ENCODE measurements at regions of chr2 and their contacts with region 1.

Region 1: GRCh38 chr2:62456721-62457539 is 49.1 kb downstream of the TMEM17 start:
- DNase-seq: peak; percentile 12 to 25
- ATAC-seq: peak; percentile 73 to 84
- H3K4me3 ChIP-seq: peak overlapping the region; percentile 63 to 99 (median 75)
- H3K27ac ChIP-seq: peak overlapping the region; percentile 50 to 73 (median 58)
- H3K4me1 ChIP-seq: peaks cover 3 to 7% of the 10 kb centered on the region in 2 donors
- H3K27me3 ChIP-seq: no peaks in the 10 kb centered on the region
- CTCF ChIP-seq: peak; percentile 89 to 99 (median 97)
- POLR2A ChIP-seq: no peak

Region 2: DNA sequence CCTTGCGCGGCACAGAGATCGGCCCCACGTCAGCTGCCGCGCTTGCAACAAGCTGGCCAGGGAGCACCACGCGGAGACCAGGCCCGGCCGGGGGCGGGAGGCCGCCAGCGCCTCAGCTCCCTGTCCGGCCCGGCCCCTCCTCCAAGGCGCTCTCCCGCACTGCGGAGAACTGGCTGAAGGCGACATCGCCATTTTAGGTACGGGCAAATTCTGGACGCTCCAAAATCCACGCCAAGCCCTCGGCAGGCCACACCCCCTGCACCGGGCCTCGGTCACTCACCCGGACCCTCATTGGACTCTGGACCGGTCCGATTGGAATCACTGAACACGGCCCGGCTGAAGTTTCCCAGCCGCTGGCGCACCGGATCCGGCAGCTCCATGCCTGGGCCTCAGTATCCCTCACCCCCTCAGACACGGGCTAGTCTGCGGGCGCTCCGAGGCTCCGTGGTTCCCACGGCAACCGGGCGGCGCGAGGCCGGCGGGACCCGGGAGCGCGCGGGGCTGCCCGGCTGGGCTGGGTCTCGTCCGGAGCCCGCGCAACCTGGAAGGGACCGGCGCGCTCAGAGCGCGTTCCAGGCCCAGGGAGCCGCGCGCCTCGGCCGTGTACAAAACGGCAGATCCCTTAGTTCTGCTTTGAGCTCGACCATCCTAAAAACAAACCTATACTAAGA is 49.0 kb after region 1 on chr2 and contains the start of gene TMEM17:
- in situ Hi-C with region 1: no loop called
- intact Hi-C with region 1: loop called (anchors 5 kb)
- DNase-seq: peak; percentile 84 to 85
- ATAC-seq: peak; percentile 96 to 97
- H3K4me3 ChIP-seq: peak within 1 kb of the TSS; percentile 66 to 79 (median 70)
- H3K27ac ChIP-seq: peak within 1 kb of the TSS; percentile 79 to 85 (median 84)
- H3K4me1 ChIP-seq: peaks cover 8 to 9% of the 10 kb centered on the region in 2 donors
- H3K27me3 ChIP-seq: no peaks in the 10 kb centered on the region
- CTCF ChIP-seq: no peak
- POLR2A ChIP-seq: peak in 1 of 2 donors; percentile 49
- total RNA-seq, gene TMEM17: 0.15 to 1.8 (median 0.51) TPM

Region 3: GRCh38 chr2:62774555-62775366 is 317.8 kb after region 1 on chr2:
- in situ Hi-C with region 1: loop called (anchors 5 kb)
- intact Hi-C with region 1: loop called (anchors 1 kb)
- DNase-seq: no peak
- ATAC-seq: peak; percentile 63 to 76
- H3K4me3 ChIP-seq: no peak overlapping the region
- H3K27ac ChIP-seq: no peak overlapping the region
- H3K4me1 ChIP-seq: no peaks in the 10 kb centered on the region
- H3K27me3 ChIP-seq: no peaks in the 10 kb centered on the region
- CTCF ChIP-seq: peak; percentile 58 to 90 (median 80)
- POLR2A ChIP-seq: no peak

Region 4: GRCh38 chr2:62801814-62802523 is 345.0 kb after region 1 on chr2:
- in situ Hi-C with region 1: no loop called
- intact Hi-C with region 1: no loop called
- DNase-seq: no peak
- ATAC-seq: no peak
- H3K4me3 ChIP-seq: no peak overlapping the region
- H3K27ac ChIP-seq: no peak overlapping the region
- H3K4me1 ChIP-seq: no peaks in the 10 kb centered on the region
- H3K27me3 ChIP-seq: no peaks in the 10 kb centered on the region
- CTCF ChIP-seq: no peak
- POLR2A ChIP-seq: no peak